Left ventricle myocardium superior (tissue), 1 donor: ENCODE measurements at regions of chr5 and their contacts with region 1.

Region 1: DNA sequence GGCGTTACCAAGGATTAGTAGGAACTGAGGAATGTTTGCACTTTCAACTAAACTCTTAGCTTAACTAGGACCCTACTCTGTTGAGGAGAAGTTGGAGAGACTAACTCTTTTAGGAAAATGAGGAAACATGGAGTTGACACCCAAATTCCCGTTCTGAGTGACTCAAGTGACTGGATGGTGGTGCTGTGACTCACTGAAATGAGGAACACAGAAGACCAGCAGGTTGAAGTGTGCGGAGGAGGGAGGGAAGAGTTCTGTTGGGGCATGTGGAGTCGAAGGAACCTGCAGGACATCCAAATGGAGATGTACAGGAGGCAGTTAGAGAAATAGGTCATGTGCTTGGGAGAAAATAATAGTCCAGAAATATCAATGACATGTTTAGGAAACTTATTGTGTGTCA is 8.2 kb downstream of the HEXB start:
- DNase-seq: no peak
- ATAC-seq: no peak

Region 2: DNA sequence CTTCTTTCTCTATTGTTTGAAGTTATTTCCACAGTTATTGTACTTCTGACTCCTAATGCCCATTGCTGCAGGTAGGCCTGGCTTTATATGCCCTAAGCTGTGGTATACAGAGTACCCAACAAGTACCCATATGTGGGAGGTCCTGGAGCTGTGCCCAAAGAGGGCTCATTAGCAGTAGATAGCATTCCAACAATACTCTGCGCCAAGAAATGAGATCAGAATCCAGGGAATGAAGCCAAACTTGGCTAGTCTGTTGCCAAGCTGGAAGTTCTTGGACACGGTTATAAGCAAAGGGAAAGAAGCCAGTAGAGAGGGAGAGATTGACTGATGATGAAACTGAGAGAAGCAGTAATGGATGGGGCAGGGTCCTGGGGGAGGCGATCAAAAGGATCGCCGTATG is 202.7 kb after region 1 on chr5:
- intact Hi-C with region 1: loop called (anchors 10 kb)
- DNase-seq: peak; percentile 84
- ATAC-seq: peak; percentile 100